ENCODE measurements at regions of chr5 and their contacts with region 1.

Region 1: GRCh38 chr5:77086689-77087483 is at the start of gene ZBED3:
- DNase-seq: peak; percentile 23 to 81 (median 61)
- ATAC-seq: peak; percentile 81 to 92 (median 84)
- H3K4me3 ChIP-seq: peak within 1 kb of the TSS; percentile 70 to 77
- H3K4me3 Mint-ChIP-seq: peak within 1 kb of the TSS; percentile 80 to 92 (median 86)
- H3K27ac ChIP-seq: peak within 1 kb of the TSS; percentile 21
- H3K27ac Mint-ChIP-seq: peak within 1 kb of the TSS in 1 of 2 donors; percentile 89
- H3K4me1 ChIP-seq: peaks cover 2 to 19% of the 10 kb centered on the region in 2 experiments
- H3K4me1 Mint-ChIP-seq: peaks cover 7 to 16% (median 13%) of the 10 kb centered on the region in 3 donors
- H3K27me3 ChIP-seq: peaks cover 0 to 16% of the 10 kb centered on the region in 2 experiments
- H3K27me3 Mint-ChIP-seq: peaks cover 3% of the 10 kb centered on the region in 2 donors
- total RNA-seq, gene ZBED3: 2.9 to 5.1 (median 4.3) TPM

Region 2: GRCh38 chr5:76983468-76983867 is 103.4 kb before region 1 on chr5:
- CTCF ChIA-PET with region 1: no interaction called
- POLR2A ChIA-PET with region 1: no interaction called
- DNase-seq: no peak
- ATAC-seq: no peak
- H3K4me3 ChIP-seq: no peak overlapping the region
- H3K4me3 Mint-ChIP-seq: no peak overlapping the region
- H3K27ac ChIP-seq: no peak overlapping the region
- H3K27ac Mint-ChIP-seq: no peak overlapping the region
- H3K4me1 ChIP-seq: no peaks in the 10 kb centered on the region
- H3K4me1 Mint-ChIP-seq: no peaks in the 10 kb centered on the region
- H3K27me3 ChIP-seq: no peaks in the 10 kb centered on the region
- H3K27me3 Mint-ChIP-seq: no peaks in the 10 kb centered on the region

Region 3: DNA sequence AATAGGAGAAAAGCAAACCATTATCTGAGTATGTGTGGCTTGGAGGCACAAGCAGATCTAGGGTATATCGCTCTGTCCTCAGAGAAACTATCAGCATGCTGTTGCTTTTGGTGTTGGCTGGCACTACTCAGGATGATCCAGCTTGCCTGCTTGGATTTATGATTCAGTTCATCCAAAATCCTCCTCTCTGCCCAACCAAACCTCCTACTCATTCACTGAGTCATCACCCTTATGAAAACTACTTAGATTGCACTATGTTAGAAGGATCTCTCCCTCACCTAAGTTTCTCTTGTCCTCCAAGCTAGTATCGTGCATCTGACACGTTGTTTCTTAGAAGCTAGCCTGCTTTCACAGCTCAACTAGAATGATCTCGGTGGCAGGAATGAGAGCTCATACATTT is 14.4 kb after region 1 on chr5:
- CTCF ChIA-PET with region 1: interaction called in 1 of 2 experiments, 10 read pairs
- POLR2A ChIA-PET with region 1: no interaction called
- DNase-seq: no peak
- ATAC-seq: no peak
- H3K4me3 ChIP-seq: no peak overlapping the region
- H3K4me3 Mint-ChIP-seq: no peak overlapping the region
- H3K27ac ChIP-seq: no peak overlapping the region
- H3K27ac Mint-ChIP-seq: no peak overlapping the region
- H3K4me1 ChIP-seq: no peaks in the 10 kb centered on the region
- H3K4me1 Mint-ChIP-seq: no peaks in the 10 kb centered on the region
- H3K27me3 ChIP-seq: no peaks in the 10 kb centered on the region
- H3K27me3 Mint-ChIP-seq: peaks cover 0 to 3% of the 10 kb centered on the region in 2 donors

Region 4: DNA sequence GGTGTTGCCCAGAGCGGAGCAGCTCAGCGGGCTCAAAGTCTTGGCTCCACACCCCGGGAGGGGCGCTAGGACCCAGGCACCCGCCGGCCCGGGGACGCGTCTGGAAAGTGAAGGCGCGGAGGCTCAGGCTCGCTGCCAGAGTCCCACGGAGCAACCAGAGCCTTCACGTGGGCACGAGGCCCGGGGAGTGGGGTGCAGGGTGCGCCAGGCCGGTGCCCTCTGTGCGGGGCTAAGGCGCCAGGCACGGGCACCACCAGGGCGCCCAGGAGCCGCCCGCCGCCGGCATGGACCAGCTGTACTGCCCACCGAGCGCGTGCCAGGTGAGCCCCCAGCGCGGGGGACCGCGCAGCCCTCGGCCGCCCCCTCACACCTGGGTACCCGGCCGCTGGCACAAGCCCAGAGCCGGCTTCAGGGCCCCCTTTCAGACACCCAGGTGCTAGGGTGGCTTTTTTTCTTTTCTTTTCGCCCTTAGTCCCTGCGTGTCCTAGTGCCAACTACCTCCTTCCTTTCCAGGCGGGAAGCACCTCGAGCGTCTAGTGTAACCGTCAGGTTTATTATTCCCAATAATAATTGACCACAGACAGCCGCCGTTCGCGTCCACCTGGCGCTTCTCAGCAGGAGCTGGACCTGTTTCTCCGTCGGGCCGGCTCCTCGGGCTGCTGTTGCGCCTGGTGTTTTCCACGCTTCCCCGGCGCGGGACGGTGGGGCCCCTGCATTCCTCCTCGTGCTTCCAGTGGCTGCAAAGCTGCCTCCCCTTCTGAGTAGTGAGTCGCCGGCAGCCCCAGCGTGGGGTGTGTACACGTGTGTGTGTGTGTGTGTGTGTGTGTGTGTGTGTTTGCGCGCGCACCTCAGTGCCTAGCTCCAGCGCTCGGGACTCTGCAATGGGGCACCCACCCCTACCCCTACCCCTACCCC is 93.5 kb after region 1 on chr5:
- CTCF ChIA-PET with region 1: no interaction called
- POLR2A ChIA-PET with region 1: no interaction called
- DNase-seq: peak in 1 of 35 experiments; percentile 6
- ATAC-seq: peak in 2 of 4 experiments; percentile 31 to 53
- H3K4me3 ChIP-seq: peak overlapping the region in 1 of 2 donors; percentile 48
- H3K4me3 Mint-ChIP-seq: peak overlapping the region in 1 of 3 donors; percentile 48
- H3K27ac ChIP-seq: no peak overlapping the region
- H3K27ac Mint-ChIP-seq: no peak overlapping the region
- H3K4me1 ChIP-seq: peaks cover 0 to 8% of the 10 kb centered on the region in 2 experiments
- H3K4me1 Mint-ChIP-seq: peaks cover 0 to 4% (median 2%) of the 10 kb centered on the region in 3 donors
- H3K27me3 ChIP-seq: peaks cover 8 to 26% of the 10 kb centered on the region in 2 experiments
- H3K27me3 Mint-ChIP-seq: peaks cover 29 to 45% of the 10 kb centered on the region in 2 donors

Region 5: DNA sequence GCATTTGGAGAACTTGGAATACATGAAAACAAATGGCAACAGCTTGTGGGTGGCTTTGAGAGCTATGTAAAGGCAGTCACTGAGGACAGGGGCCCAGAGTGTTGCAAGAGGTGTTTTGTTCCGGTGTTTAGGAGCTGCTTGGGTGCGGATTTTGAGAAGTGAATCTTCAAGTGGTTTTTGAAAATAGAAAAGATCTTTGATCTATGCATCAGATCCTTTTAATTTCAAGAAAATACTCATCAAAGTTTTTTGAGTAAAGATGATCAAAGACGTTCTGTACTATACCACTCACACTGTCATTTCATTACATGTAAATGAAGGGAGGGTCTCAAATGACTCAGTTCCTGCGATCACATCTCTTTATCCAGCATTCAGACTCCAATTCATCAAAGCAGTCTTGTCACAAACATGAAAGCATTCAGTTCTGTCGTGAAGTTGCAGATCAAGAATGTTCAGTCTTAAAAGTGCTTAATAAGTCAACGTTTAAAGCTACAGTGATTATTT is 292.7 kb after region 1 on chr5:
- CTCF ChIA-PET with region 1: no interaction called
- POLR2A ChIA-PET with region 1: no interaction called
- DNase-seq: peak in 31 of 35 experiments; percentile 3 to 60 (median 19)
- ATAC-seq: peak; percentile 84 to 97 (median 92)
- H3K4me3 ChIP-seq: no peak overlapping the region
- H3K4me3 Mint-ChIP-seq: peak overlapping the region in 2 of 3 donors; percentile 12 to 14
- H3K27ac ChIP-seq: peak overlapping the region; percentile 45
- H3K27ac Mint-ChIP-seq: peak overlapping the region; percentile 86 to 88
- H3K4me1 ChIP-seq: peaks cover 0 to 4% of the 10 kb centered on the region in 2 experiments
- H3K4me1 Mint-ChIP-seq: peaks cover 26 to 29% (median 29%) of the 10 kb centered on the region in 3 donors
- H3K27me3 ChIP-seq: peaks cover 0 to 4% of the 10 kb centered on the region in 2 experiments
- H3K27me3 Mint-ChIP-seq: peaks cover 0 to 6% of the 10 kb centered on the region in 2 donors